K562 (cell line): ENCODE measurements at regions of chr1 and their contacts with region 1.

Region 1: DNA sequence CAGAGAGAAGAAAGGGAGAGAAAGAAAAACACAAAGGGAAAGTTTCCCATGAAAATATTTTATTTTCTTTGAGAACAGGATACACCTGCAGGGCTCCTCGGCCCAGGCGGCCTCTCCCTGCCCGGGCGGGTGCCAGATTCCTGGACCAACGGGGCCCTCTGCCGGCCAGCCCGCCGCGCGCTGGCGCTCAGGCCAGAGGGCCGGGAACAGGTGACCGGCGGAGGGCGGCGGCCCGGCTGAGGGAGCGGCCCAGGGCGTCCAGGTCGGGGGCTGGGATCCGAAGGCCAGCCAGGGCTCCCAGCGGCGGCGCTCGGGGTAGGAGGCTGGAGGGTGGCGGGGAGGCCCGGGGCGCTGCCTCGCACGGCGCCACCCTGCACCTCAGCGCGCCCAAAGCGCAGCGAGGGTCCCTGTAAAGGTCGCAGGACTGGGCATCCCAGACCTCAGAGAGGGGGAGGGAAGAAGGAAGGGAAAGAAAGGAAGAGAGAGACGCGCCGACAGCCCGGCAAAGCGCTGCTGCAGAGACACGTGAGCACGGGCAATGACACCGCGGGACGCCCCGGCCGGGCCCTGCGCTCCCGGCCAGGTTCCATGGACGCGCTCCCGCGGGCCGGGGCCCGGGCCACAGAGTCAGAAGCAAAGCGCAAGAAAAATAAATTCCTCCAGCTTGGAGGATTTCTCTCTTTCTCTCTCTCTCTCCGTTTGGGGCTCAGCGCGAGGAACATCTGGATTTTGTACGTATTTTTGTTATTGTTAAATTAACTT is 927 bp downstream of the WNT9A start:
- DNase-seq: peak; percentile 83 to 92 (median 90)
- ATAC-seq: peak; percentile 92
- H3K4me3 ChIP-seq: peak overlapping the region; percentile 40
- H3K27ac ChIP-seq: no peak overlapping the region
- H3K4me1 ChIP-seq: peaks cover 2 to 47% of the 10 kb centered on the region in 2 experiments; a peak in 4 of 5 replicates
- H3K27me3 ChIP-seq: peaks cover 11 to 82% of the 10 kb centered on the region in 2 experiments
- CTCF ChIP-seq: peak; percentile 85 to 96 (median 92)
- EP300 ChIP-seq: no peak
- POLR2A ChIP-seq: no peak
- RAD21 ChIP-seq: peak; percentile 88 to 96

Region 2: GRCh38 chr1:226634166-226634588 is 1312.6 kb before region 1 on chr1:
- CTCF ChIA-PET with region 1: no interaction called
- POLR2A ChIA-PET with region 1: no interaction called
- in situ Hi-C with region 1: loop called (anchors 10 kb)
- intact Hi-C with region 1: no loop called
- DNase-seq: peak; percentile 83 to 87 (median 84)
- ATAC-seq: peak; percentile 94
- H3K4me3 ChIP-seq: no peak overlapping the region
- H3K27ac ChIP-seq: no peak overlapping the region
- H3K4me1 ChIP-seq: peaks cover 0 to 17% of the 10 kb centered on the region in 2 experiments; a peak in 2 of 5 replicates
- H3K27me3 ChIP-seq: peaks cover 22 to 79% of the 10 kb centered on the region in 2 experiments
- CTCF ChIP-seq: peak; percentile 93 to 96 (median 95)
- EP300 ChIP-seq: no peak
- POLR2A ChIP-seq: no peak
- RAD21 ChIP-seq: peak; percentile 93 to 98

Region 3: GRCh38 chr1:227459977-227460376 is 486.8 kb before region 1 on chr1:
- CTCF ChIA-PET with region 1: no interaction called
- POLR2A ChIA-PET with region 1: no interaction called
- in situ Hi-C with region 1: loop called (anchors 5 kb)
- intact Hi-C with region 1: loop called (anchors 10 kb)
- DNase-seq: no peak
- ATAC-seq: no peak
- H3K4me3 ChIP-seq: no peak overlapping the region
- H3K27ac ChIP-seq: no peak overlapping the region
- H3K4me1 ChIP-seq: no peaks in the 10 kb centered on the region
- H3K27me3 ChIP-seq: peaks cover 21 to 26% of the 10 kb centered on the region in 2 experiments
- CTCF ChIP-seq: no peak
- EP300 ChIP-seq: no peak
- POLR2A ChIP-seq: no peak
- RAD21 ChIP-seq: no peak

Region 4: GRCh38 chr1:227482023-227482299 is 464.8 kb before region 1 on chr1:
- CTCF ChIA-PET with region 1: interaction called, 21 read pairs
- POLR2A ChIA-PET with region 1: no interaction called
- in situ Hi-C with region 1: no loop called
- intact Hi-C with region 1: loop called (anchors 1 kb)
- DNase-seq: no peak
- ATAC-seq: no peak
- H3K4me3 ChIP-seq: no peak overlapping the region
- H3K27ac ChIP-seq: no peak overlapping the region
- H3K4me1 ChIP-seq: no peaks in the 10 kb centered on the region
- H3K27me3 ChIP-seq: no peaks in the 10 kb centered on the region
- CTCF ChIP-seq: no peak
- EP300 ChIP-seq: no peak
- POLR2A ChIP-seq: no peak
- RAD21 ChIP-seq: no peak

Region 5: GRCh38 chr1:227762233-227762911 is 184.4 kb before region 1 on chr1:
- CTCF ChIA-PET with region 1: interaction called, 25 read pairs
- POLR2A ChIA-PET with region 1: interaction called, 4 read pairs
- in situ Hi-C with region 1: no loop called
- intact Hi-C with region 1: loop called (anchors 1 kb)
- DNase-seq: peak; percentile 90 to 97 (median 97)
- ATAC-seq: peak; percentile 100
- H3K4me3 ChIP-seq: no peak overlapping the region
- H3K27ac ChIP-seq: no peak overlapping the region
- H3K4me1 ChIP-seq: peaks cover 5 to 20% of the 10 kb centered on the region in 2 experiments
- H3K27me3 ChIP-seq: no peaks in the 10 kb centered on the region
- CTCF ChIP-seq: peak; percentile 98
- EP300 ChIP-seq: no peak
- POLR2A ChIP-seq: no peak
- RAD21 ChIP-seq: peak; percentile 94 to 96

Region 6: GRCh38 chr1:227849251-227849650 is 97.6 kb before region 1 on chr1:
- CTCF ChIA-PET with region 1: no interaction called
- POLR2A ChIA-PET with region 1: no interaction called
- in situ Hi-C with region 1: no loop called
- intact Hi-C with region 1: loop called (anchors 1 kb)
- DNase-seq: no peak
- ATAC-seq: no peak
- H3K4me3 ChIP-seq: no peak overlapping the region
- H3K27ac ChIP-seq: peak overlapping the region; percentile 69
- H3K4me1 ChIP-seq: peaks cover 13 to 36% of the 10 kb centered on the region in 2 experiments
- H3K27me3 ChIP-seq: no peaks in the 10 kb centered on the region
- CTCF ChIP-seq: peak in 1 of 3 experiments; percentile 42; a peak in 2 of 6 replicates
- EP300 ChIP-seq: no peak
- POLR2A ChIP-seq: no peak
- RAD21 ChIP-seq: peak; percentile 18 to 32; a peak in 3 of 4 replicates